ENCODE measurements at regions of chr2 and their contacts with region 1.

Region 1: GRCh38 chr2:109331896-109332848 is 203.2 kb downstream of the SH3RF3 start:
- DNase-seq: peak; percentile 55
- H3K4me3 Mint-ChIP-seq: peak overlapping the region; percentile 59
- H3K27ac Mint-ChIP-seq: no peak overlapping the region
- H3K4me1 Mint-ChIP-seq: peaks cover 35% of the 10 kb centered on the region
- H3K27me3 Mint-ChIP-seq: no peaks in the 10 kb centered on the region

Region 2: DNA sequence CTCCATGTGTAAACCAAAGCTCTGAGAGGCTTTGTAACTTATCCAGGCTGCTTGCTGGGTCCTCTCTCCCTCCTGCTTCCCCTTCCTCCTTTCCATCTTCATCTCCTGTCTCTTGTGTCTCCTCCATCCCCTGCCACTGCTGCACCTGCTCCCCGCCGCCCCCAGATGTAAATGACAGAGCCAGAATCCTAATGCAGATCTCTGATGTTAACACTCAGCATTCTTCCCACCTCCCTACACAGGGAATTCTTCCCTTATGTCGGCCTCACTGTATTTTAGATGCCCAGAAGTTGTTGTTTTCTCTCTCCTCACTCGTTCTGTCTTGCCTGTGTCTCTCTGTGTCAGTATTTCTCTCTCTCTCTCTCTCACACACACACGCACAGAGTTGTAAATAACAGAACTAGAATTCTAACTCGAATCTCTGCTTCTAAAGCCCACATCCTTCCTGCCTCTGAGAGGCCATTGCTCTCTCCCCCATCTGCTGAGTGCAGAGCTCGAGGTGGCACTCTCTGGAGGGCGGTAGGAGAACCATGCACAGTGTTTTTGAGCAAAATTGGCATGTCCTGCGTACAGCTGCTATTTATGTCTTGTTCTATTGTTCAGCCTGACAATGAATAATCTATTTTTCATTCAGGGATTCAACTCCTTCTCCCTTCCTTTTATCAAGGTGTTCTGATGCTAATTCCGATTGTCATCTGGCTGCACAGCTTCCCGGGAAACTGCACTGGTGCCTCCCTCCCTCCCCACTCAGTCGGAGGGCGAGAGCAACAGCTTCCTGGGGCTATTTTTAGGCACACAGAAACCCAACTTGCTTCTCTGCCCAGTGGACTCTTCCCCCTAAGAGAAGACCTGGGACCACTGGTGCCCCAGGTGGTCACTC is 16.7 kb after region 1 on chr2:
- CTCF ChIA-PET with region 1: no interaction called
- intact Hi-C with region 1: loop called (anchors 1 kb)
- DNase-seq: peak; percentile 72
- H3K4me3 Mint-ChIP-seq: peak overlapping the region; percentile 9
- H3K27ac Mint-ChIP-seq: peak overlapping the region; percentile 31
- H3K4me1 Mint-ChIP-seq: peaks cover 46% of the 10 kb centered on the region
- H3K27me3 Mint-ChIP-seq: no peaks in the 10 kb centered on the region

Region 3: DNA sequence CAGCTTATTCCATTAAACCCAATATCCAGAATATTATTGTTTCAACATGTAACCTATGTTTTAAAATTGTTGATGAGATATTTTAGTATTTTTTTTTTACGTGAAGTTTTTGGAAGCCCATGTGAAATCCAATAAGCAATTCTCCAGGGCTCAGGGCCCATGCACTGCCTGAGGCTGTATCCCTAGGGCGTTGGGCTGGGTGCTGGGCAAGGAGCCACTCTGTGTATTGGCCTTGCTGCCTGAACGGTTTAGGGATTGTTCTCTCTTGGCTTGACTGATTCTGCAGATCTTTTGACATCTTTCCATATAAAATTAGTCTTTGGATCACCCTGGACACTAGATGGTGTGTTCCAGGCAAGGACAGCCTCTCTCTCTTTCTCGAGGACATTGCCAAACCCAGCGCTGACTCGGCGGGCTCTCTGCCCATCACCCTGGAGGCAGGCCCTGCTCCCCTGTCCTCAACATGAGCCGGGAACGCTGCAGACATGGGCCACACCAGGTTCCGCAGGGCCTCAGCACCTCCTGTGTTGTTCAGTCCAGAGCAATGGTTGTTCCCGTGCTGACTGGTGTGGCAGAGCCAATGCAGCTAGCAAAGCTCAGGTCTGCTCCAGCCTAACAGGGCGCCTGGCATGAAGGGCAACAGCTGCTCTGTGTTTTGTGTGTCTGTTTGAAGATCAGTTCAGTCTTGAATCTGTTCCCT is 118.6 kb after region 1 on chr2:
- CTCF ChIA-PET with region 1: no interaction called
- intact Hi-C with region 1: loop called (anchors 5 kb)
- DNase-seq: no peak
- H3K4me3 Mint-ChIP-seq: no peak overlapping the region
- H3K27ac Mint-ChIP-seq: no peak overlapping the region
- H3K4me1 Mint-ChIP-seq: peaks cover 10% of the 10 kb centered on the region
- H3K27me3 Mint-ChIP-seq: no peaks in the 10 kb centered on the region